ENCODE measurements at regions of chr3 and their contacts with region 1.

Region 1: DNA sequence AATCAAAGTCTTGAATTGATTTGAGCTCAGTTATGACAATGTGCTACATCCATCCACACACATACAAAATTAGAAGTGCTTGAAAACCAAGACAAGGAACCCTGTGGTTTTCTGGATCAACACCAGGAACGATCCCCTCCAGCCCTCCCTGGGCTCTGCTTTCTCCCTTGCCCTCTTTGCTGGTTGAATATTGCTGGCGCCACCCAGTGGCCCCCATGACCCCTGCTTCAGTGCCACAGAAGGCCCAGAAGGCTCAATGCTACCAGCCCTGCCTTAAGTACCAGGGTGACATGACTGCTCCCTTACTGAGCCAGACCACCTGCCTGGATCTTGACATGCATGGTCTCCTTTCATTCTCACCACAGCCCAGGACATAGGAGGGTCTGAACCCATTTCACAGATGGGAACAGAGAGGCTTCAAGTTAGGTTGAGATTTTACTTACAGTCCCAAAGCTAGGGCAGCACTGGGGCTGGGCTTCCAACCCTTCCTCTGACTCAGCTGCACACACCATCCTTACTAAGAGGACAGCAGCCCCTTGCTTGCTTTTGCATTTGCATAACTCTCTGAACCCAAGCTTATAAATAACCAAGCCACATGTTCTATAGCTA is 15.0 kb downstream of the IL12A start:
- DNase-seq: peak; percentile 30 to 55
- ATAC-seq: peak; percentile 74 to 84 (median 80)
- H3K4me3 ChIP-seq: no peak overlapping the region
- H3K27ac ChIP-seq: no peak overlapping the region
- H3K4me1 ChIP-seq: no peaks in the 10 kb centered on the region
- H3K27me3 ChIP-seq: no peaks in the 10 kb centered on the region
- CTCF ChIP-seq: peak; percentile 52

Region 2: GRCh38 chr3:158845765-158846350 is 1157.8 kb before region 1 on chr3:
- intact Hi-C with region 1: loop called in 1 of 2 experiments (anchors 10 kb)
- DNase-seq: no peak
- ATAC-seq: peak in 2 of 4 donors; percentile 49 to 67
- H3K4me3 ChIP-seq: no peak overlapping the region
- H3K27ac ChIP-seq: no peak overlapping the region
- H3K4me1 ChIP-seq: no peaks in the 10 kb centered on the region
- H3K27me3 ChIP-seq: no peaks in the 10 kb centered on the region
- CTCF ChIP-seq: peak; percentile 70

Region 3: GRCh38 chr3:158896729-158897128 is 1106.9 kb before region 1 on chr3:
- intact Hi-C with region 1: no loop called
- DNase-seq: no peak
- ATAC-seq: no peak
- H3K4me3 ChIP-seq: no peak overlapping the region
- H3K27ac ChIP-seq: no peak overlapping the region
- H3K4me1 ChIP-seq: no peaks in the 10 kb centered on the region
- H3K27me3 ChIP-seq: no peaks in the 10 kb centered on the region
- CTCF ChIP-seq: no peak

Region 4: GRCh38 chr3:159260049-159260662 is 743.5 kb before region 1 on chr3:
- intact Hi-C with region 1: loop called (anchors 5 to 10 kb)
- DNase-seq: no peak
- ATAC-seq: peak in 2 of 4 donors; percentile 50 to 74
- H3K4me3 ChIP-seq: no peak overlapping the region
- H3K27ac ChIP-seq: no peak overlapping the region
- H3K4me1 ChIP-seq: no peaks in the 10 kb centered on the region
- H3K27me3 ChIP-seq: no peaks in the 10 kb centered on the region
- CTCF ChIP-seq: peak; percentile 83

Region 5: GRCh38 chr3:159616212-159616825 is 387.3 kb before region 1 on chr3:
- intact Hi-C with region 1: loop called in 1 of 2 experiments (anchors 5 kb)
- DNase-seq: no peak
- ATAC-seq: peak in 1 of 4 donors; percentile 49
- H3K4me3 ChIP-seq: no peak overlapping the region
- H3K27ac ChIP-seq: no peak overlapping the region
- H3K4me1 ChIP-seq: no peaks in the 10 kb centered on the region
- H3K27me3 ChIP-seq: no peaks in the 10 kb centered on the region
- CTCF ChIP-seq: peak; percentile 44

Region 6: DNA sequence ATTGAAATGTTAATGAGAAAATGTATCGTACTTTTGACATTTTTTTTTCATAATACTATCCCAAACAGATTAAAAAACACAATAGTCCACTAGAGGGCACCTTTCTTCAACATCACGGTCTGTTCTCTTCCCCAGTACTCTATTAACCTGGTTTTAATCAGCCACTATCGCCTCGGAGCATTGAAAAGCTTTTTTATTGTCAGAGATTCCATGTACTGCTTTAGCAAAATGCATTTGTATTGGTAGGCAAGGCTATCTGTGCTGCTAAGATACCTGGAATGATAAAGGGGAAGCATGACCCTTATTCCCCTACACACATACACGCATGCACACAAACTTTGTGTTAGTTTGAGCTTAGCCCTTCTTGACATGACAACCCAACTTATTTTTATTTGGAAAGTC is 175.1 kb before region 1 on chr3:
- intact Hi-C with region 1: loop called (anchors 2 to 5 kb)
- DNase-seq: no peak
- ATAC-seq: peak; percentile 43 to 67 (median 47)
- H3K4me3 ChIP-seq: peak overlapping the region; percentile 44
- H3K27ac ChIP-seq: peak overlapping the region; percentile 78
- H3K4me1 ChIP-seq: peaks cover 42% of the 10 kb centered on the region
- H3K27me3 ChIP-seq: no peaks in the 10 kb centered on the region
- CTCF ChIP-seq: peak; percentile 70

Region 7: GRCh38 chr3:159884661-159885402 is 118.8 kb before region 1 on chr3:
- intact Hi-C with region 1: loop called (anchors 5 kb)
- DNase-seq: no peak
- ATAC-seq: no peak
- H3K4me3 ChIP-seq: no peak overlapping the region
- H3K27ac ChIP-seq: peak overlapping the region; percentile 91
- H3K4me1 ChIP-seq: peaks cover 59% of the 10 kb centered on the region
- H3K27me3 ChIP-seq: no peaks in the 10 kb centered on the region
- CTCF ChIP-seq: peak; percentile 44

Region 8: GRCh38 chr3:159892171-159892795 is 111.3 kb before region 1 on chr3:
- intact Hi-C with region 1: loop called (anchors 5 kb)
- DNase-seq: peak in 1 of 2 donors; percentile 57
- ATAC-seq: peak in 2 of 4 donors; percentile 47 to 50
- H3K4me3 ChIP-seq: no peak overlapping the region
- H3K27ac ChIP-seq: peak overlapping the region; percentile 31
- H3K4me1 ChIP-seq: peaks cover 20% of the 10 kb centered on the region
- H3K27me3 ChIP-seq: no peaks in the 10 kb centered on the region
- CTCF ChIP-seq: no peak

Region 9: GRCh38 chr3:159964166-159964973 is 39.3 kb before region 1 on chr3:
- intact Hi-C with region 1: no loop called
- DNase-seq: no peak
- ATAC-seq: no peak
- H3K4me3 ChIP-seq: no peak overlapping the region
- H3K27ac ChIP-seq: no peak overlapping the region
- H3K4me1 ChIP-seq: no peaks in the 10 kb centered on the region
- H3K27me3 ChIP-seq: no peaks in the 10 kb centered on the region
- CTCF ChIP-seq: no peak

Measured in psoas muscle (tissue), 8 donors.